GM12878 (cell line): ENCODE measurements at regions of chr15 and their contacts with region 1.

Region 1: DNA sequence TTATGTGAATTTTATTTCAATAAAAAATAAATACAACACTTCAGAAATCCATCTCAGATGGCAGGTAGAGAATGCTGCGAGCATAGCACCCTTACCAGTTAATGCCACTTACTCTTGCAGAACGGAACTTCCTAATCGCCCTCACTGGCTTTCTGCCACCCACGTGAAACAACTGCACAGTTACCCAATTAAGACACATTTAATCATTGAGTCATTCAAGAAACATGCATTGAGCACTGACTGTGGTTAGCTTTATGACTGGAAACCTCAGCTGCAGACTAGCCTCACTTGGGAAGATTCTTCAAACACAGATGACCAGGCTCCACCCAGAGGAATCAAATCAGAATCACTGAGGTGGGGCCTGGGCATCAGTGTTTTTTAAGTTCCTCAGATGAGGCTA is 5.6 kb upstream of the MFGE8 start:
- DNase-seq: peak; percentile 75
- ATAC-seq: peak; percentile 88
- H3K4me3 ChIP-seq: no peak overlapping the region
- H3K27ac ChIP-seq: no peak overlapping the region
- H3K4me1 ChIP-seq: peaks cover 8% of the 10 kb centered on the region
- H3K27me3 ChIP-seq: peaks cover 0 to 2% of the 10 kb centered on the region in 2 experiments; a peak in 1 of 4 replicates
- CTCF ChIP-seq: no peak
- EP300 ChIP-seq: peak in 1 of 2 experiments; percentile 50; a peak in 1 of 4 replicates
- POLR2A ChIP-seq: no peak
- RAD21 ChIP-seq: no peak

Region 2: DNA sequence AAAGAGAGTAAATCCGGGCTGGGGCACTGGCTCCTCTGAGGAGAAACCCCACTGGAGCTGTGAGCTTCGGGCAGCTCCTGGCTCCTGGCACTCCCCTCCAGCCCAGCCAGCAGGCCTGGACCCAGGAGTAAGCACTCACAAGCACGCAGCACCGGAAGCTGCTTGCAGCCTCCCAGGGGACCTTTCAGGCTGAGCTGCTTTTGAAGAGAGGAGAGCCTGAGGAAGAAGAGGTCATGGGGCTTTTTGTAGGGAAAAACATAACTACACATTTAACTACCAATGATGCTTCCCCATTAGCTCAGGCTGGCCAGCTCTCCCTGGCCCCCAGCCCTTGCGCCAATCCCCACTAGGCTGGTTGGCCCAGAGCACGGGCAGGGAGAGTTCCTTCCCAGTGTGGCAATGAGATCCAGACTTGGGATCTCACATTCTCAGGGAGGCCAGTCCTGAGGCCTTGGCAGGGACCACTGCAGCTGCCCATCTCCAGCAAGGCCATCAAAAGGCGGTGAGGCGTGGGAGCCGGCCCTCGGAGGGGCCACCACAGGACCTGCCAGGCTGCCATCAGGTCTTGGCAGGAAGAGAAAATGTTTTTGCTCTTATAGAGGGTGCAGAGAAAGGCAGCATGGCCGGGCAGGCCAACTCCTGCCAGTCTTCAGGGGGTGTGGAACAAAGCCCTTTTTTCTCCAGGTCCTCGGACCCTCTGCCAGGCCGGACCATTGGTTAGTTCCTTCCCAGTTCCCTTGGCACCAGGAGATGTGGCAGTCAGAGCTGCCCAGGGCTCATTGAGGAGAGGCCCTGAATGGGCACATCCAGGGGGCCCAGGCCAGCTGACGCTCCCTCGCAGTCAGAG is 35.9 kb after region 1 on chr15:
- CTCF ChIA-PET with region 1: no interaction called
- POLR2A ChIA-PET with region 1: no interaction called
- RAD21 ChIA-PET with region 1: interaction called, 3 read pairs
- SMC1A ChIA-PET with region 1: no interaction called
- in situ Hi-C with region 1: no loop called
- intact Hi-C with region 1: loop called (anchors 5 kb)
- DNase-seq: no peak
- ATAC-seq: peak; percentile 72
- H3K4me3 ChIP-seq: no peak overlapping the region
- H3K27ac ChIP-seq: no peak overlapping the region
- H3K4me1 ChIP-seq: peaks cover 6% of the 10 kb centered on the region
- H3K27me3 ChIP-seq: no peaks in the 10 kb centered on the region; a peak in 1 of 4 replicates
- CTCF ChIP-seq: no peak
- EP300 ChIP-seq: no peak
- POLR2A ChIP-seq: no peak
- RAD21 ChIP-seq: no peak

Region 3: GRCh38 chr15:88982304-88982945 is 63.7 kb after region 1 on chr15:
- CTCF ChIA-PET with region 1: no interaction called
- POLR2A ChIA-PET with region 1: interaction called, 9 read pairs
- RAD21 ChIA-PET with region 1: interaction called, 6 read pairs
- SMC1A ChIA-PET with region 1: interaction called, 4 read pairs
- in situ Hi-C with region 1: no loop called
- intact Hi-C with region 1: loop called (anchors 1 kb)
- DNase-seq: peak; percentile 83
- ATAC-seq: peak; percentile 97
- H3K4me3 ChIP-seq: no peak overlapping the region
- H3K27ac ChIP-seq: no peak overlapping the region
- H3K4me1 ChIP-seq: peaks cover 19% of the 10 kb centered on the region
- H3K27me3 ChIP-seq: no peaks in the 10 kb centered on the region
- CTCF ChIP-seq: no peak
- EP300 ChIP-seq: peak; percentile 56 to 82; a peak in 3 of 4 replicates
- POLR2A ChIP-seq: no peak
- RAD21 ChIP-seq: no peak

Region 4: DNA sequence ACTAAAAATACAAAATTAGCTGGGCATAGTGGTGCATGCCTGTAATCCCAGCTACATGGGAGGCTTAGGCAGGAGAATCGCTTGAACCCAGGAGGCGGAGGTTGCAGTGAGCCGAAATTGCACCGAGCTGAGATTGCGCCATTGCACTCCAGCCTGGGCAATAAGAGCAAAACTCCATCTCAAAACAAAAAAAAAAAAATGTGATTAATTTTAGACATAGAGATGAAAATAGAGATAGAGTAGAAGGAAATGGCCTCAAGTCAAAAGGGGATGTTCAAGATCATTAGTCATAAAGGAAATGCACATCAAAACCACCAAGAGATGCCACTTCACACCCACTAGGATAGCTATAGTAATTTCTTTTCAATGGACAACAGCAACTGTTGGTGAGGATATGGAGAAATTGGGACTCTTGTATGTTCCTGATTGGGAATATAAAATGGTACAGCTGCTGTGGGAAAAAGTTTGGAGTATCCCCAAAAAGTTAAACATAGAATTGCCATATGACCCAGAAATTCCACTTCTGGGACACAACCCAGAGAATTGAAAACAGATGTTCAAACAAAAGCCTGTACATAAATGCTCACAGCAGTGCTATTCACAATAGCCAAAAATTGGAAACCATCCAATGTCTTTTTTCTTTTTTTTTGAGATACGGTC is 224.9 kb after region 1 on chr15:
- CTCF ChIA-PET with region 1: no interaction called
- POLR2A ChIA-PET with region 1: no interaction called
- RAD21 ChIA-PET with region 1: no interaction called
- SMC1A ChIA-PET with region 1: no interaction called
- in situ Hi-C with region 1: no loop called
- intact Hi-C with region 1: no loop called
- DNase-seq: peak; percentile 21
- ATAC-seq: peak; percentile 66
- H3K4me3 ChIP-seq: no peak overlapping the region
- H3K27ac ChIP-seq: no peak overlapping the region
- H3K4me1 ChIP-seq: no peaks in the 10 kb centered on the region
- H3K27me3 ChIP-seq: no peaks in the 10 kb centered on the region
- CTCF ChIP-seq: no peak
- EP300 ChIP-seq: no peak
- POLR2A ChIP-seq: no peak
- RAD21 ChIP-seq: no peak